GM12878 (cell line): ENCODE measurements at regions of chr12 and their contacts with region 1.

Region 1: DNA sequence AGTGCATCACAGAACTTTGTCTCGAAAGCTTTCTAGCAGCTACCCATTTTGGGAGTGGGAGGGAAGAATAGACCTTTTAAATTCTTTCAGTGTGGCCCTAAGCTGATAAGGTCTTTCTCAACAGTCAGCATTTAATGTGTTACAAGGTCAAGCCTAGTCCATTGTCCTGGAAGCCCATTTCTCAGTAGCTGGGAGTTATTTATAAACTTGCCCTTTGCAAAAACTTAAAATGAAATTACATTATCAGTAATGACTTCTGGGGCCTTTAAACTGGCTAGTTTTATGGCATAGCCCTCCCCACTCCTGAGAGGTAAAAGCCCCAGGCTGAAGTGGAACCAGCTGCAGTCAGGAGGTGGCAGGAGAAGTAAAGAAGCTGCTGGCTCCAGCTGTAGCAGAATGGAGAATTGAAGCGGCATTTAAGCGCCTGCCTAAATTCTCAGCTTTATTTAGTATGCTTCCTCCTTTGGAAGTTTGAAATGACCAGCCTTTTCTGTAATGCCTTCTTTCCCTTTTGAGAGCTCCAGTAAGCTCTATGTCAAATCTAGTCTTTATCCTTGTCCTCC is 12.4 kb downstream of the COPZ1 start:
- DNase-seq: no peak
- ATAC-seq: no peak
- H3K4me3 ChIP-seq: no peak overlapping the region
- H3K27ac ChIP-seq: no peak overlapping the region
- H3K4me1 ChIP-seq: no peaks in the 10 kb centered on the region
- H3K27me3 ChIP-seq: no peaks in the 10 kb centered on the region
- CTCF ChIP-seq: 0 out of 6 replicates have a peak, but pooled peaks of 1 of the 3 experiments have one; percentile 5
- EP300 ChIP-seq: no peak
- POLR2A ChIP-seq: no peak
- RAD21 ChIP-seq: 0 out of 2 replicates have a peak, but pooled peaks have one; percentile 16

Region 2: GRCh38 chr12:54053751-54054741 is 283.3 kb before region 1 on chr12 and contains the start of gene HOXC4:
- CTCF ChIA-PET with region 1: no interaction called
- POLR2A ChIA-PET with region 1: no interaction called
- RAD21 ChIA-PET with region 1: no interaction called
- SMC1A ChIA-PET with region 1: no interaction called
- in situ Hi-C with region 1: no loop called
- intact Hi-C with region 1: no loop called
- DNase-seq: no peak
- ATAC-seq: peak; percentile 86
- H3K4me3 ChIP-seq: peak within 1 kb of the TSS; percentile 84
- H3K27ac ChIP-seq: peak within 1 kb of the TSS; percentile 89
- H3K4me1 ChIP-seq: peaks cover 22% of the 10 kb centered on the region
- H3K27me3 ChIP-seq: no peaks in the 10 kb centered on the region
- CTCF ChIP-seq: no peak
- EP300 ChIP-seq: no peak
- POLR2A ChIP-seq: no peak; the same call in 1 of the 2 replicates
- RAD21 ChIP-seq: no peak
- polyA plus RNA-seq, gene HOXC4: 1.0 to 1.8 TPM

Region 3: GRCh38 chr12:54352022-54352531 is 14.7 kb after region 1 on chr12:
- CTCF ChIA-PET with region 1: interaction called, 113 read pairs
- POLR2A ChIA-PET with region 1: interaction called, 5 read pairs
- RAD21 ChIA-PET with region 1: interaction called, 3 read pairs
- SMC1A ChIA-PET with region 1: interaction called, 8 read pairs
- in situ Hi-C with region 1: no loop called
- intact Hi-C with region 1: no loop called
- DNase-seq: no peak
- ATAC-seq: no peak
- H3K4me3 ChIP-seq: no peak overlapping the region
- H3K27ac ChIP-seq: no peak overlapping the region
- H3K4me1 ChIP-seq: no peaks in the 10 kb centered on the region
- H3K27me3 ChIP-seq: no peaks in the 10 kb centered on the region
- CTCF ChIP-seq: no peak
- EP300 ChIP-seq: no peak
- POLR2A ChIP-seq: peak; percentile 36; the same call in 1 of the 2 replicates
- RAD21 ChIP-seq: no peak

Region 4: GRCh38 chr12:54379401-54380201 is 42.2 kb after region 1 on chr12:
- CTCF ChIA-PET with region 1: interaction called, 16 read pairs
- POLR2A ChIA-PET with region 1: no interaction called
- RAD21 ChIA-PET with region 1: no interaction called
- SMC1A ChIA-PET with region 1: interaction called, 4 read pairs
- in situ Hi-C with region 1: no loop called
- intact Hi-C with region 1: no loop called
- DNase-seq: no peak
- ATAC-seq: peak; percentile 95
- H3K4me3 ChIP-seq: no peak overlapping the region
- H3K27ac ChIP-seq: no peak overlapping the region
- H3K4me1 ChIP-seq: peaks cover 4% of the 10 kb centered on the region
- H3K27me3 ChIP-seq: no peaks in the 10 kb centered on the region
- CTCF ChIP-seq: peak; percentile 100; a peak in 5 of 6 replicates
- EP300 ChIP-seq: no peak
- POLR2A ChIP-seq: no peak
- RAD21 ChIP-seq: peak; percentile 73